MCF 10A (cell line): ENCODE measurements at regions of chr1 and their contacts with region 1.

Region 1: DNA sequence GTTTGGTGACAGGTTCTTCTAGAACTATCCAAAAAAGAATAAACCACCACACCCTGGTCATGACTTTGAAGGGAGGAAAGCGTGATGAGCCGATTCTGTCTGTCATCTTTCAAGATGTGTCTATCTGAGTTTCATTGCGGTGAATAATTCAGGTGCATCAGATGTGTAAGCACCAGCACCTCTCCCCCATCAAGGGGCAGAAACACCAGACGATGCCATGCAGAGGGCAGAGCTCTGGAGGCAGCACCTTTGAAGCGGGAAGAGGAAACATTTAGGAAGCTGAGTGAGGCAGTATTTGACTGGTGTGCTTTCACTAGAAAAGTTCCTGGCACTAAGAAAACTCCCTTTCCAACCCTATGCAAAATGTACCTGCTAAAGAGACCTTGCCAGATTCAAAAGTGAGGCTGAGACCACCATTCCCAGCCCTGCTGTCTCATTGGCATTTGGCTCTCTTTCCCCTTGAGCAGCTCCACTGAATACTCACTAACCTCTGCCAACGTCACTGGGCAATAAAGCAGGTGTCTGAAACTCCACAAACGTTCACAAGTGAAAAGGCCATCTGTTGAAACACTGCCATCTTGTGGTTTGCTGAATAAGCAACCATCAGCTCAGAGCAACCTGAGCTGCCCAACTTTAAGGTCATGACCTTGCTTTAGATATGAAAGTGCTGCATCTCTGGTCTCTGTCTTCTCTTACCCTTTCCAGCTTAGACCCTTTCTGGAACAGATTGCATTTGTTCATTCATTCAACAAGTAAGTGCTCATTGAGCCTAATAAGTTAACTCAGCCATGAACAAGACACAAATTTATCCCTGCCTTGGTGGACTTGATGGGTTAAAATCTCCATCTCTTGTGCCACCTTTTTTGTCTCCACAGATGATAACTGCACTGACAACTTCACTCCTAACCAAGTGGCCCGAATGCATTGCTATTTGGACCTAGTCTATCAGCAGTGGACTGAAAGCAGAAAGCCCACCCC is 228.6 kb downstream of the PAPPA2 start:
- DNase-seq: peak; percentile 81
- H3K4me3 Mint-ChIP-seq: no peak overlapping the region
- H3K27ac Mint-ChIP-seq: no peak overlapping the region
- H3K4me1 Mint-ChIP-seq: peaks cover 7% of the 10 kb centered on the region
- H3K27me3 Mint-ChIP-seq: no peaks in the 10 kb centered on the region
- CTCF ChIP-seq: peak; percentile 89

Region 2: DNA sequence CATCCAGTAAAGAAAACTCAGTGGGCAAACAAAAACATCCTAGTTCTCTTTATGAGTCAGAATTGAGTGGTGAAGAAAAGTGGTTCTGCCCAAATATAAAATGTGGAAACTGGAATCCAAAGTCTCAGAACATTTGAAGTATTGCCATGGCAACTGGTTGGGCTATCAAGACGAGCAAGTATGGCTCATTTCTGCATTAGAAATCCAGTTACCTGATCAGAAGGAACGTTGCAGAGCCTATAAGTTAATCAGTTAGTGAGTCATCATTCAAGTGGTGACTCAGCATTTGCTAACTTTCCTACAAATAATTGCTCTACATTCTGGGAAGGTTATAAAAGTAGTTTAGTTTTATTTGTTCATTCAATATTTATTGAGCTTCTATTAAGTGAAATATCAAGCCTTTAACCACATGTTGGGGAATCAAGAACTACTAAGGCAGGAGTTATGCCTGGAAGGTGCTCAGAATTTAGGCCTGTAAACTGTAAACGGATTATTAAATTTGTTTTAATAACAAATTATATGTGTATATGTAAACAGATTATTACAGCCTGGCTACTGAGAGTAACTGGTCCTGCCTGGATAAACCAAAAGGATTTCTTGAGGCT is 124.2 kb before region 1 on chr1:
- CTCF ChIA-PET with region 1: interaction called, 252 read pairs
- POLR2A ChIA-PET with region 1: no interaction called
- intact Hi-C with region 1: no loop called
- DNase-seq: peak; percentile 47
- H3K4me3 Mint-ChIP-seq: no peak overlapping the region
- H3K27ac Mint-ChIP-seq: no peak overlapping the region
- H3K4me1 Mint-ChIP-seq: peaks cover 18% of the 10 kb centered on the region
- H3K27me3 Mint-ChIP-seq: no peaks in the 10 kb centered on the region
- CTCF ChIP-seq: no peak

Region 3: DNA sequence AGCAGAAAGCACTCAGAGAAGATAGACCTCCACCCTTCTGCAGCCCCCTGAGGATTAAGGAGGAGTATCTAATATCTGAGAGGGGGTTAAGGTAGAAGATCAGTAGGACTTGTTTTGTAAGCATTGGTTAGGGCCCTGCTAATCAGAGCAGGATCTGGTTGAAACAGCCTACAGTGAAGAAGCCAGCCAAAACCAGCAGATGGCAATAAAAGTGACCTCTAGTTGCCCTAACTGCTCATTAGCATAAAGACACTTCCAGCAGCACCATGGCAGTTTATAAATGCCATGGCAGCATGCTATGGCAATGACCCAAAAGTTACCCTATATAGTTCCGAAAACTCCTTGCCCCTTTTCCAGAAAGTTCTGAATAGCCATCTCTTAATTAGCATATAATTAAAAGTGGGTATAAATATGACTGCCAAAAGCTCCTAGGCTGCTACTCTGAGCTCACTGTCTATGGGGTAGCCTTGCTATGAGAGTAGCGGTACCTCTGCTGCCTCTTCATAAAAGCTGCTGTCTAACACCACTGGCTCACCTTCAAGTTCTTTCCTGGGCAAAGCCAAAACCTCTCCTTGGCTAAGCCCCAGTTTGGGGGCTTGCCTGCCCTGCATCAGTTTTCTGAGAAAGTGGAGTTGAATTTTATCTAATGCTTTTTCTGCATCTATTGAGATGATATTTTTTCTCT is 25.7 kb after region 1 on chr1:
- CTCF ChIA-PET with region 1: interaction called, 14 read pairs
- POLR2A ChIA-PET with region 1: interaction called, 3 read pairs
- intact Hi-C with region 1: no loop called
- DNase-seq: no peak
- H3K4me3 Mint-ChIP-seq: no peak overlapping the region
- H3K27ac Mint-ChIP-seq: no peak overlapping the region
- H3K4me1 Mint-ChIP-seq: no peaks in the 10 kb centered on the region
- H3K27me3 Mint-ChIP-seq: no peaks in the 10 kb centered on the region
- CTCF ChIP-seq: no peak

Region 4: GRCh38 chr1:176765608-176766007 is 74.1 kb after region 1 on chr1:
- CTCF ChIA-PET with region 1: no interaction called
- POLR2A ChIA-PET with region 1: no interaction called
- intact Hi-C with region 1: no loop called
- DNase-seq: no peak
- H3K4me3 Mint-ChIP-seq: no peak overlapping the region
- H3K27ac Mint-ChIP-seq: no peak overlapping the region
- H3K4me1 Mint-ChIP-seq: no peaks in the 10 kb centered on the region
- H3K27me3 Mint-ChIP-seq: no peaks in the 10 kb centered on the region
- CTCF ChIP-seq: no peak

Region 5: GRCh38 chr1:176843352-176844297 is 152.1 kb after region 1 on chr1:
- CTCF ChIA-PET with region 1: interaction called, 19 read pairs
- POLR2A ChIA-PET with region 1: no interaction called
- intact Hi-C with region 1: loop called (anchors 1 kb)
- DNase-seq: peak; percentile 53
- H3K4me3 Mint-ChIP-seq: no peak overlapping the region
- H3K27ac Mint-ChIP-seq: no peak overlapping the region
- H3K4me1 Mint-ChIP-seq: no peaks in the 10 kb centered on the region
- H3K27me3 Mint-ChIP-seq: no peaks in the 10 kb centered on the region
- CTCF ChIP-seq: peak; percentile 84